MCF 10A (cell line): ENCODE measurements at regions of chr20 and their contacts with region 1.

Region 1: GRCh38 chr20:46757754-46758678 is 48.6 kb downstream of the SLC2A10 start:
- DNase-seq: peak; percentile 72
- H3K4me3 Mint-ChIP-seq: no peak overlapping the region
- H3K27ac Mint-ChIP-seq: no peak overlapping the region
- H3K4me1 Mint-ChIP-seq: peaks cover under 1% of the 10 kb centered on the region
- H3K27me3 Mint-ChIP-seq: peaks cover 27% of the 10 kb centered on the region
- CTCF ChIP-seq: peak; percentile 93

Region 2: GRCh38 chr20:47020231-47020630 is 262.2 kb after region 1 on chr20:
- CTCF ChIA-PET with region 1: interaction called, 5 read pairs
- POLR2A ChIA-PET with region 1: no interaction called
- intact Hi-C with region 1: loop called (anchors 1 kb)
- DNase-seq: no peak
- H3K4me3 Mint-ChIP-seq: no peak overlapping the region
- H3K27ac Mint-ChIP-seq: no peak overlapping the region
- H3K4me1 Mint-ChIP-seq: no peaks in the 10 kb centered on the region
- H3K27me3 Mint-ChIP-seq: peaks cover 47% of the 10 kb centered on the region
- CTCF ChIP-seq: no peak

Region 3: DNA sequence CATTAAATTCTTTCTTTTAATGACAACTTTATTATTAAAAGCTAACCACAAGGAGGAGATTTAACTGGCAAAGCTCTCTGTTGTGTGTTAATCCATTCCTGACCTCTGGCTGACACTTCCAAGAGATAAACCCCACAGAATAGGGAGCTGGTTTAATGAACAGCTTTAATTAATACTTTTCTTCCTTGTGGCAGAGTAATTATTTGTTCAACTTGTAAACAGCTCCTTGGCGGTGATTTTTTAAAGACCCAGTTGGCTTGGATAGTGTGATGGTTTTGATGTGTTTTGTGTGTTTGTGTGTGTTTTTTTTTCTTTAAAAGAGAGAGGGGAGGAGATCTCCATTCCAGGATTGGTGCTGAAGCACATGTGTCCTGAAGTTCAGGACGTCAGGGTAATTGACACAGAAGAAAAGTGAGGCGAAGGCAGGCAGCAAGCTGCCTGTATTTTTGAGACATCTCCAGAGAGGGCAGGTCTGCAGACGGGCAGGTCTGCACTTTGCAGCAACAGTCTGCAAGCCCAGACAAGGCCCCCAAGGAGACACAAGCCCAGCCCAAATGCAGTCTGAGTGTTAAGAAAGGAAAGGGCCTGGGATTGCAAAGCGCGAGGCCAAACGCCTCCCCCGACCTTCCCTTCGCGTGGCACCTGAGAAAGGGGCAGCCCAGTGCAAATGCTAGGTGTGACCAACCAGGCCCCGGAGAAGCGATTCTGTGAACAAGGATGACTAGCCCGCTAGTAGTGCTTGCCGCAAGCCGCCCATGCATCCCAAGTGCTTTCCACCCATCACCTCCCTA is 367.8 kb after region 1 on chr20:
- CTCF ChIA-PET with region 1: interaction called, 10 read pairs
- POLR2A ChIA-PET with region 1: interaction called, 15 read pairs
- intact Hi-C with region 1: no loop called
- DNase-seq: peak; percentile 90
- H3K4me3 Mint-ChIP-seq: peak overlapping the region; percentile 20
- H3K27ac Mint-ChIP-seq: peak overlapping the region; percentile 83
- H3K4me1 Mint-ChIP-seq: peaks cover 25% of the 10 kb centered on the region
- H3K27me3 Mint-ChIP-seq: no peaks in the 10 kb centered on the region
- CTCF ChIP-seq: no peak

Region 4: GRCh38 chr20:47150403-47151152 is 392.6 kb after region 1 on chr20:
- CTCF ChIA-PET with region 1: interaction called, 7 read pairs
- POLR2A ChIA-PET with region 1: no interaction called
- intact Hi-C with region 1: loop called (anchors 1 kb)
- DNase-seq: peak; percentile 88
- H3K4me3 Mint-ChIP-seq: no peak overlapping the region
- H3K27ac Mint-ChIP-seq: no peak overlapping the region
- H3K4me1 Mint-ChIP-seq: peaks cover 5% of the 10 kb centered on the region
- H3K27me3 Mint-ChIP-seq: no peaks in the 10 kb centered on the region
- CTCF ChIP-seq: peak; percentile 57

Region 5: DNA sequence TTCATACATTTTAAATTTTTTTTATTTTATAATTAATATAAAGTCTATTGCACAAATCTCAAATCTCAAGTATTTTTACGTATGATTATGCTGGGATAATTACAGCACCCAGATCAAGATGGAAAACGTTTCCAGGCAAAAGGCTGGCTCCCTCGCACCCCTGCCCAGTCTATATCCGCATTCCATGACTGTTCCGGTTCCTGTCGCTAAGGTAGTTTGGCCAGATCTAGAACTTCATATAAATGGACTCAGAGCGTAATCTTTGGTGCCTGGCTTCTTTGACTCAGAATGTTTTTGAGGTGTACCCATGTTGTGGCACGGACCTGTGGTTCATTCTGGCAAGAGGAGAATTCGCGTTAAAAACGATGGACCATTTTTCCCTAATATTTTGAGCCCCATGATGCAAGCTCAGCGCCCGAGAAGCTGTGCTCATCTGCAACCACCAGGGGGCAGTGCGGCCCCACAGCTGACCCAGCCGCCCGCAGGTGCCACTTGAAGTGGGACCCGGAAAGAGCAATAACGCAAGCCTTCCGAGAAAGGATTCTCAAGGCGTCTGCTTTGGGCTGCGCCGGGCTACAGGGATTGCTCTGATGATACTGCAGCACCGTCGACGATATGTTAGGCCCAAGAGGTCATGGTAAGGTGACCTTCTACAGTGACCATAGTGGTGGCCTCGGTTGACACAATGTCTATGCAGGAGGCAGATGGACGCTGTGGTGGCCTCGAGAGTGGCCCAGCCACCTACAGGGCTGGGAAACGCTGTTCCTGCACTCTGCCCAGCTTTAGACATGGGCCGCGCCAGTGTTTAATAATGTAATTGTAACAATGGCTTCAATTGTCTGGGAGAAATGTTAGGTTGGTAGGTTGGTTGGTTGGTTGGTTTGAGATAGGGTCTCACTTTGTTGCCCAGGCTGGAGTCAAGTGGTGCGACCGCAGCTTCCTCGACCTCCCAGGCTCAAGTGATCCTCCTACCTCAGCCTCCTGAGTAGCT is 438.4 kb after region 1 on chr20:
- CTCF ChIA-PET with region 1: interaction called, 46 read pairs
- POLR2A ChIA-PET with region 1: no interaction called
- intact Hi-C with region 1: loop called (anchors 10 kb)
- DNase-seq: peak; percentile 70
- H3K4me3 Mint-ChIP-seq: no peak overlapping the region
- H3K27ac Mint-ChIP-seq: no peak overlapping the region
- H3K4me1 Mint-ChIP-seq: peaks cover 5% of the 10 kb centered on the region
- H3K27me3 Mint-ChIP-seq: no peaks in the 10 kb centered on the region
- CTCF ChIP-seq: peak; percentile 93

Region 6: DNA sequence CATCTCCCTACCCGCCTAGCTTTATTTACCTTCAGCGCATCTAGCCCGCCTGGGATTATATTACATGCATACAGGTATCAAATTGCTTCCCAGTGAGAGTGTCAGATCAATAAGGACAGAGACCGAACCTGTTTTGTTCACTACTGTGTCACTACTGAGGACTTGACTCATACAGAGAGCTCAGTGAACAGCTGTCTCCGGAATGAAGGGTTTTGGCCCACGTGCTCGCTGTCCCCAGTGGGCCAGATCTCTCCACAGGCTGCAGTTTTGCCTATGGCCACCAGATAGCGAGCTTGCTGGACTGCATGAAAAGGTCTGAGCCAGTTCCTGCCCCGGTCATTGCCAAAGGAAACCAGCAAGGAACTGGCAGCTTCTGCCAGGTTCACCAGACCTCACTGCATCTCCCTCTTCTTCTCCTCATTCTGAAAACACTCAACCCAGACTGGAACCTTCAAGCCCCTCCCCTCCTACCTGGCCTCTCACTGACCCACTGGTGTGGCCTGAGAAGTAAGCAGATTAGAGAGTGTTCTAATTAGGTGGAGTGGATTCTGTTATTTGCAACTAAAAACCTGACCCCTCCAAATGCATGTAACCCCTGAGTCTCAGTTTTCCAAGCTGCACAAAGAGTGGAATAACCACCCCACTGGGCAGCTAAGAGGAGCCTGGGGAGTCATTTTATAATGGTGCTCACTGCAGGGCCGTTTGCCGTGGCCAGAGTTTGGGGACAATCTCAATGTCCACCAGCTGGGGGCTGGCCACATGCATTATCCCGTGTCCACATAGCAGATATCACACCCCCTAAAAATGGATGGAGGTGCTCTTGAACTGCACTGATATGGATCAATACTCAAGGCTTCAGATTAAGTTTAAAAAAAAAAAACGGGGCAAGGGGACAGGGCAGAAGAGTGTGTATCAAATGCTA is 447.8 kb after region 1 on chr20:
- CTCF ChIA-PET with region 1: interaction called, 46 read pairs
- POLR2A ChIA-PET with region 1: interaction called, 5 read pairs
- intact Hi-C with region 1: no loop called
- DNase-seq: peak; percentile 69
- H3K4me3 Mint-ChIP-seq: no peak overlapping the region
- H3K27ac Mint-ChIP-seq: no peak overlapping the region
- H3K4me1 Mint-ChIP-seq: peaks cover 6% of the 10 kb centered on the region
- H3K27me3 Mint-ChIP-seq: no peaks in the 10 kb centered on the region
- CTCF ChIP-seq: peak; percentile 67